ENCODE measurements at regions of chr12 and their contacts with region 1.

Region 1: DNA sequence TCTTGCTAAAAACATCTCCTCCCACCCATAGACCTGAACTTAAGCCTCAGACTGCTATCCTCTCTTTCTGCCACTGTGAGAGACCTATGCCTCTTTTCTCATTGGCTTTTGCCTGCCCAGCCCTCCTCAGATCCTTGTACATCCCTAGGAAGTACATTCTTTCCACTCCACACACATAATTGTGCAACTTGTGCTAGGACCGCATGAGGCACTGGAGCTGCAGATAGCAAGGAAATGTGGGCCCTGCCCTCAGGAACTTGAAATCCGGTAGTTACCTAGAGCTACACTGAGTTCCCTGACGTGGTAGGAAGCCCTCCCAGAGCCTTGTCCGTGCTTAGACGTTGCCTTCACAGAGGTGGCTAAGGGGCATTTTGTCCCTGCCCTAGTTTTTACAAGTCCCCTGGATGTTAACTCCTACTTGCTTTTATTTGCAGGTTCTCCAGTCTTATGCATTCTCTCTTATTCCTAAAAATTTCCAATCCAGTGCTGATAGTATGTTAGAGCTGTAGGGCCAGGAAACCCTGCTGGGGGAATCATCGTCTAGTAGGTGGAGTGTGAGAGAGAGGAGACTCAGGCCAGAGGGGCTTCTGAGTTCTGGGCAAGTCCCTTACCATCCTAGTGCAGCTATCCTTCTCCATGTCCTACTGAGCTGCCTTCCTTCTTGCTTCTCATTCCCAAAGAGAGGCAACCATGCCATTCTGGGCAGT is 41.3 kb downstream of the NTF3 start:
- DNase-seq: no peak
- H3K27ac ChIP-seq: no peak overlapping the region
- CTCF ChIP-seq: no peak

Region 2: GRCh38 chr12:5493018-5493417 is 19.8 kb after region 1 on chr12:
- CTCF ChIA-PET with region 1: interaction called, 11 read pairs
- POLR2A ChIA-PET with region 1: no interaction called
- DNase-seq: no peak
- H3K27ac ChIP-seq: no peak overlapping the region
- CTCF ChIP-seq: no peak

Measured in RWPE1 (cell line).